B cell (primary cell): ENCODE measurements at regions of chr17 and their contacts with region 1.

Region 1: DNA sequence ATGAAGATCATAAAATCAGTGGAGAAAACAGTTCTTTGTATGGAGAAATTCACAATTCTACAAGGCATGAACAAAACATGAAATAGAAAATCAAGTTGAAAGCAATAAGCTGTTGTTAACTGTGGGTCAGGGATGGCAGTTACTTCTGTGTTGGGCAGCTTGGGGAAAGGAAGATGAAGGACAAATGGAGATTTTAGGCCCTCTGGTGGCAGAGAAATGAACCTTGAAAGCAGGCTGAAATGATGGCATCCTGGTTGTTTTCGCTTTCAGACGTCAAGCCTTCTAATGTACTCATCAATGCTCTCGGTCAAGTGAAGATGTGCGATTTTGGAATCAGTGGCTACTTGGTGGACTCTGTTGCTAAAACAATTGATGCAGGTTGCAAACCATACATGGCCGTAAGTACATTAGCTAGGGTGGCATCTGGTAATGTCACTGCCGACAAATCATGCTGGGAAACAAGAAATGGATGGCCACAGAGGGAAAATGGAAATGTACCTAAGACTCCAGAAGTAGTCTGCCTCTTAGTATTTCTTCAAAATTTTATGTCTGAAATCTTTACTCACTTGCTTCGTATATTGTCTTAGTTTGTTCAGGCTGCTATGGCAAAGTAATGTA is 108.9 kb downstream of the MAP2K6 start:
- DNase-seq: peak; percentile 49
- ATAC-seq: peak; percentile 41
- H3K4me3 ChIP-seq: no peak overlapping the region
- H3K4me3 Mint-ChIP-seq: no peak overlapping the region
- H3K27ac ChIP-seq: no peak overlapping the region
- H3K27ac Mint-ChIP-seq: no peak overlapping the region
- H3K4me1 ChIP-seq: peaks cover 5% of the 10 kb centered on the region in 2 donors
- H3K4me1 Mint-ChIP-seq: peaks cover 13% of the 10 kb centered on the region
- H3K27me3 ChIP-seq: peaks cover 0 to 24% (median 11%) of the 10 kb centered on the region in 4 experiments
- H3K27me3 Mint-ChIP-seq: peaks cover 23% of the 10 kb centered on the region
- CTCF ChIP-seq: peak; percentile 75

Region 2: GRCh38 chr17:69327060-69327831 is 196.1 kb before region 1 on chr17 and contains the start of gene ABCA5:
- CTCF ChIA-PET with region 1: interaction called, 4 read pairs
- POLR2A ChIA-PET with region 1: no interaction called
- intact Hi-C with region 1: loop called (anchors 2 kb)
- DNase-seq: peak; percentile 95
- ATAC-seq: peak; percentile 93
- H3K4me3 ChIP-seq: peak within 1 kb of the TSS; percentile 39 to 88 (median 80)
- H3K4me3 Mint-ChIP-seq: peak within 1 kb of the TSS; percentile 96
- H3K27ac ChIP-seq: peak within 1 kb of the TSS; percentile 86 to 90
- H3K27ac Mint-ChIP-seq: peak within 1 kb of the TSS; percentile 98
- H3K4me1 ChIP-seq: peaks cover 7 to 12% of the 10 kb centered on the region in 2 donors
- H3K4me1 Mint-ChIP-seq: peaks cover 17% of the 10 kb centered on the region
- H3K27me3 ChIP-seq: peaks cover 0 to 11% (median 1%) of the 10 kb centered on the region in 4 experiments
- H3K27me3 Mint-ChIP-seq: peaks cover 12% of the 10 kb centered on the region
- CTCF ChIP-seq: no peak
- total RNA-seq, gene ABCA5: 37.2 and 37.8 TPM in 2 replicates

Region 3: GRCh38 chr17:69358688-69359596 is 164.4 kb before region 1 on chr17:
- CTCF ChIA-PET with region 1: interaction called, 6 read pairs
- POLR2A ChIA-PET with region 1: no interaction called
- intact Hi-C with region 1: loop called (anchors 1 kb)
- DNase-seq: peak; percentile 31
- ATAC-seq: no peak
- H3K4me3 ChIP-seq: no peak overlapping the region
- H3K4me3 Mint-ChIP-seq: no peak overlapping the region
- H3K27ac ChIP-seq: no peak overlapping the region
- H3K27ac Mint-ChIP-seq: no peak overlapping the region
- H3K4me1 ChIP-seq: no peaks in the 10 kb centered on the region
- H3K4me1 Mint-ChIP-seq: peaks cover 1% of the 10 kb centered on the region
- H3K27me3 ChIP-seq: no peaks in the 10 kb centered on the region
- H3K27me3 Mint-ChIP-seq: peaks cover 21% of the 10 kb centered on the region
- CTCF ChIP-seq: no peak

Region 4: DNA sequence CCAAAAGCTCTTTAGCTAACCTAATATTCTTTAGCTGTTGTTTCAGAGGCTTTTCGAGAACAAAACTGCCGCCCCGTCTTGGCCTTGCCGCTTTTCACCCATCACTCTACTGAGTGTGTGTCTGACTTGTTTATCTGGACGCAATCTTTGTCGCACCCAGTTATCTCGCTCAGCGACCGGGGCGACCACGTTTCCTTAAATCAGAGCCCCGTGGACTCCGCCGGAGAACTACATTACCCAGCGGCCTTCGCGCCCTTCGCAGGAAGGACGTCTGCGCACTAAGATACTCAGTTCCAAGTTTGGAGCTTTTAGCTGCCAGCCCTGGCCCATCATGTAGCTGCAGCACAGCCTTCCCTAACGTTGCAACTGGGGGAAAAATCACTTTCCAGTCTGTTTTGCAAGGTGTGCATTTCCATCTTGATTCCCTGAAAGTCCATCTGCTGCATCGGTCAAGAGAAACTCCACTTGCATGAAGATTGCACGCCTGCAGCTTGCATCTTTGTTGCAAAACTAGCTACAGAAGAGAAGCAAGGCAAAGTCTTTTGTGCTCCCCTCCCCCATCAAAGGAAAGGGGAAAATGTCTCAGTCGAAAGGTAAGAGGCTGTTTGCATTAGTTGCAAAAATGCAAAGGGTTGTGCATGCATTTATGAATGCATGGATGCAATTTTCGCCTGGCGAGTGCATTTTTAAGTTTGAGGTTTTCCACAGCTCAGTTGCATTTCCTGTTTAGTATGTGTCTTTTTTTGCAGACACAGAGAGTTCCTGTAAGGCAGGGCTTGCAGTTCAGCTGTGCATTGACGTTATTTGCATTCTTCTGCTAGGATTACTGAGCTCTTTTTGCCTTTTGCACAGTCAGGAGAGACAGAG is 108.7 kb before region 1 on chr17 and contains the start of gene MAP2K6:
- CTCF ChIA-PET with region 1: interaction called, 3 read pairs
- POLR2A ChIA-PET with region 1: no interaction called
- intact Hi-C with region 1: loop called (anchors 2 kb)
- DNase-seq: peak; percentile 83
- ATAC-seq: peak; percentile 99
- H3K4me3 ChIP-seq: peak within 1 kb of the TSS; percentile 56 to 90 (median 73)
- H3K4me3 Mint-ChIP-seq: no peak within 1 kb of the TSS
- H3K27ac ChIP-seq: no peak within 1 kb of the TSS
- H3K27ac Mint-ChIP-seq: no peak within 1 kb of the TSS
- H3K4me1 ChIP-seq: peaks cover 14 to 18% of the 10 kb centered on the region in 2 donors
- H3K4me1 Mint-ChIP-seq: no peaks in the 10 kb centered on the region
- H3K27me3 ChIP-seq: no peaks in the 10 kb centered on the region
- H3K27me3 Mint-ChIP-seq: no peaks in the 10 kb centered on the region
- CTCF ChIP-seq: no peak
- total RNA-seq, gene MAP2K6: 7.7 TPM in 2 replicates

Region 5: GRCh38 chr17:69511250-69511649 is 12.1 kb before region 1 on chr17:
- CTCF ChIA-PET with region 1: interaction called, 32 read pairs
- POLR2A ChIA-PET with region 1: no interaction called
- intact Hi-C with region 1: no loop called
- DNase-seq: no peak
- ATAC-seq: no peak
- H3K4me3 ChIP-seq: no peak overlapping the region
- H3K4me3 Mint-ChIP-seq: no peak overlapping the region
- H3K27ac ChIP-seq: no peak overlapping the region
- H3K27ac Mint-ChIP-seq: no peak overlapping the region
- H3K4me1 ChIP-seq: peaks cover 3 to 9% of the 10 kb centered on the region in 2 donors
- H3K4me1 Mint-ChIP-seq: peaks cover 10% of the 10 kb centered on the region
- H3K27me3 ChIP-seq: peaks cover 0 to 8% (median 1%) of the 10 kb centered on the region in 4 experiments
- H3K27me3 Mint-ChIP-seq: peaks cover 10% of the 10 kb centered on the region
- CTCF ChIP-seq: no peak

Region 6: GRCh38 chr17:70552230-70552981 is 1029.1 kb after region 1 on chr17:
- CTCF ChIA-PET with region 1: interaction called, 41 read pairs
- POLR2A ChIA-PET with region 1: no interaction called
- intact Hi-C with region 1: loop called (anchors 5 kb)
- DNase-seq: peak; percentile 30
- ATAC-seq: no peak
- H3K4me3 ChIP-seq: no peak overlapping the region
- H3K4me3 Mint-ChIP-seq: no peak overlapping the region
- H3K27ac ChIP-seq: no peak overlapping the region
- H3K27ac Mint-ChIP-seq: no peak overlapping the region
- H3K4me1 ChIP-seq: no peaks in the 10 kb centered on the region
- H3K4me1 Mint-ChIP-seq: no peaks in the 10 kb centered on the region
- H3K27me3 ChIP-seq: no peaks in the 10 kb centered on the region
- H3K27me3 Mint-ChIP-seq: no peaks in the 10 kb centered on the region
- CTCF ChIP-seq: peak; percentile 59